Heart right ventricle (tissue), 16 donors: ENCODE measurements at regions of chr6 and their contacts with region 1.

Region 1: DNA sequence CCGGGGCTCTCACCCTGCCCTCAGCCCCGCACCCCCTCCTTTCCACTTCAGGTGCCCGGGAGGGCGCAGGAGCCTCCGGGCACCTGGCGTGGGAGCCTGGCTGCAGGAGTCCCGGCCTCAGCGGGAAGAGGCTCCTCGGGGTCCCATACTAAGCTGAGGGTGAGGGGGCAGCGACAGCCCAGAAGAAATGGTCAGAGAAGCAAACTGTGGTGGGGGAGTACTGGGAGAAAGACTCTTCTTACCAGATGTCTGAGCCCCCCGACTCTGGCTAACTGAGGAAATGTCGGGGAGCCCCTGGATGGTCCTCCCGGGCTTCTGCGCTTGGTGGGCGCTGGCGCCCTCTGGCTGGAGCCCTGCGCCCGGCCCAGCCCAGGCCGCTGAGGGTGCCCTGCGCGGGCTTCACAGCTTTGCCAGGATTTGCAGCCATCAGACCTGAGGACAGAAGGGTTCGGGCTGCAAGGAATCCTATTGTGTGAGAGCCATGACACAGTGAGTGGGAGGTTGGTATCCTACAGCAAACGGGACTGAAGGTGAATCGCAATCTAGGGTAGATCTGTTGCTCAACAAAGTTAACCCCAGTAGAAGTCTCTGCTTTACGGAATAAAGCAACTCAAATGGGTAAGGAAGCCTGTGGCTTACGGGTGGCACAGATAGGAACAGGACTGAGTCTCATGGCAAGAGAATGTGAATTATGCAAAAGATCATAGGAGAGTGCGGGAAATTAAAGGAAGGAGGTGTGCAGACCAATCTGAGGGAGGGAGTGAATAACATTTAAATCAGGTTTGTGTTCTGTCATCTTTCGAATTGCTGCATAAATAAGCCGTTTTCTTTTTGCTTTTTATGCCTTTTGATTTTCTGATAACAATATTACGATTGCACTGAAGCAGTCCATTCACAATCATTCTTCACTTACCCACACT is 639 bp upstream of the RCAN2 start:
- DNase-seq: peak; percentile 56 to 65
- ATAC-seq: peak; percentile 84 to 94 (median 92)
- H3K4me3 ChIP-seq: peak overlapping the region; percentile 55 to 79 (median 70)
- H3K27ac ChIP-seq: peak overlapping the region; percentile 70 to 97 (median 90)
- H3K4me1 ChIP-seq: peaks cover 0 to 42% (median 11%) of the 10 kb centered on the region in 9 donors
- H3K27me3 ChIP-seq: peaks cover 0 to 73% (median 0%) of the 10 kb centered on the region in 7 donors
- CTCF ChIP-seq: peak; percentile 48 to 89 (median 74)

Region 2: GRCh38 chr6:45555981-45556771 is 935.7 kb before region 1 on chr6:
- intact Hi-C with region 1: no loop called
- DNase-seq: no peak
- ATAC-seq: peak in 7 of 8 donors; percentile 23 to 90 (median 61)
- H3K4me3 ChIP-seq: peak overlapping the region in 6 of 10 donors; percentile 2 to 32 (median 30)
- H3K27ac ChIP-seq: peak overlapping the region in 6 of 10 donors; percentile 13 to 47 (median 39)
- H3K4me1 ChIP-seq: peaks cover 0 to 17% (median 9%) of the 10 kb centered on the region in 9 donors
- H3K27me3 ChIP-seq: no peaks in the 10 kb centered on the region
- CTCF ChIP-seq: no peak

Region 3: DNA sequence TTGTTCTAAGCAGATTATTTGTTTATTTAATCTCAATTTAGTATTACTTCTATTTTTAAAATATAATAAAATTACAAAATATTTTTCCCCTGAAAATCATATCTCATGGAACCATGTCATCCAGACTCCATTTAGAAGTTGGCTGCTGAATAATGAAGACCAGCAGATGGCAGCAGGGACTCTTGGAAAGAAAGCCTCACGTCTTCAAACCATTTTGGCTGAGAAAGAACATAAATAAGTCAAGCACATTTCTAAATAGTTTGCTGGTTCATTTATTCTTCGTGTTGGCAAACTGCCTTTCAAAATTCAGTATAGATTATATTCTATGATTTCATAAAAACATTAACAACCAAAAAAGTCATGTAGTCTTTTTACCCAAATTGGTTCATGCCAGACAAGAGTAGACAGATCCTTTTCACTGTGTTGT is 72.3 kb before region 1 on chr6:
- intact Hi-C with region 1: loop called in 9 of 10 experiments (anchors 1 to 5 kb)
- DNase-seq: peak in 1 of 2 donors; percentile 76
- ATAC-seq: peak in 5 of 8 donors; percentile 42 to 67 (median 58)
- H3K4me3 ChIP-seq: no peak overlapping the region
- H3K27ac ChIP-seq: peak overlapping the region in 4 of 10 donors; percentile 4 to 59 (median 30)
- H3K4me1 ChIP-seq: peaks cover 0 to 46% (median 15%) of the 10 kb centered on the region in 9 donors
- H3K27me3 ChIP-seq: no peaks in the 10 kb centered on the region
- CTCF ChIP-seq: peak; percentile 53 to 93 (median 81)

Region 4: DNA sequence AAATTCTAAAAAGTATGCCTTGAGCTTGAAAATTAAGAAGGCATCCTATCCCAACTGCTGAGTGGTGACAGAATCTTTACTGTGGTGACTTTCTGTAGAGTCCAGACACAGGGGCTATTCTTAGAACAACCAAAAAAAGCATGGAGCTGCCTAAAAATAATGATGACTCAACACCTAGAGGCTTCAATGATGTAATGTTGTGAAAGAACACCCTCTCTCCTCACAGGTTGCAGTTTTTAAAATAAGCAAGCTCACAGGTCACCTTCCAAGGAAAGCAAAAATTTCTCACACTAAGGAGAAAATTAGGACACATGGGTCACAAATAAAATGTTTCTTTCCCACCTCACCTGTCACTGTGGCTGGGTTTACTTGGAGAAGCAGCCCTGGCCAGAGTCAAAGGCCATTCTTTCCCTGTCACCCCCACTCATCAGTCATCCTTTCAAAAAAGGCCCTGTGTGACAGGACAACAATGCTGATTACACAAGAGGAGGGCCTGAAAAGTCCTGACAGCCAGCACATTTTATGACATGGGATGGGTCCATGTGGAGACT is 54.1 kb before region 1 on chr6:
- intact Hi-C with region 1: loop called in 2 of 10 experiments (anchors 5 kb)
- DNase-seq: peak in 1 of 2 donors; percentile 23
- ATAC-seq: peak; percentile 85 to 94 (median 90)
- H3K4me3 ChIP-seq: no peak overlapping the region
- H3K27ac ChIP-seq: peak overlapping the region; percentile 47 to 89 (median 82)
- H3K4me1 ChIP-seq: peaks cover 0 to 71% (median 41%) of the 10 kb centered on the region in 9 donors
- H3K27me3 ChIP-seq: no peaks in the 10 kb centered on the region
- CTCF ChIP-seq: no peak

Region 5: DNA sequence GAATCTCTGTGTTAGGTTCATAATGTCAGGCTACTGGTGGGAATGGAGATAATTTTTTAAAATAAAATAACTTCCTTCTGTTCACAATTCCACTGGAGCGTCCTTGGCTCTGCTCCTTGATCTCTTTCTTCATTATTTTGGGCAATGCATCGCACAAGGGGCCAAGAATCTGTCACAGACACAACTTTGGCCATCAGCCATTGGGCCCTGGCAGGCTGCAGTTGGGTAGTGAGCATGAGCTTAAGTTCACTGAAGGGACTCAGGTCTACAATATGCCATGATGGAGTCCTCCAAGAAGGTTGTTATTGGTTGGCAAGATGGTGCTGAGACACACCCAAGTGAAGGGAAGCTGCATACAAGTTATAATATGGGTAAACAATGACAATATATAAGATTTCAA is 120.8 kb after region 1 on chr6:
- intact Hi-C with region 1: loop called in 1 of 10 experiments (anchors 5 kb)
- DNase-seq: peak; percentile 48 to 56
- ATAC-seq: peak in 6 of 8 donors; percentile 47 to 89 (median 80)
- H3K4me3 ChIP-seq: no peak overlapping the region
- H3K27ac ChIP-seq: peak overlapping the region in 6 of 10 donors; percentile 9 to 56 (median 42)
- H3K4me1 ChIP-seq: peaks cover 0 to 16% (median 0%) of the 10 kb centered on the region in 9 donors
- H3K27me3 ChIP-seq: no peaks in the 10 kb centered on the region
- CTCF ChIP-seq: no peak